ENCODE measurements at regions of chr1 and their contacts with region 1.

Region 1: GRCh38 chr1:245156081-245156735 is 1.4 kb downstream of the KIF26B start:
- DNase-seq: no peak
- ATAC-seq: peak; percentile 96
- H3K4me3 ChIP-seq: peak overlapping the region; percentile 50
- H3K27ac ChIP-seq: no peak overlapping the region
- H3K4me1 ChIP-seq: peaks cover 18% of the 10 kb centered on the region
- H3K27me3 ChIP-seq: peaks cover 12 to 26% of the 10 kb centered on the region in 2 experiments
- CTCF ChIP-seq: peak; percentile 57 to 81 (median 77)
- EP300 ChIP-seq: no peak
- POLR2A ChIP-seq: no peak
- RAD21 ChIP-seq: peak; percentile 65

Region 2: GRCh38 chr1:245177071-245177900 is 21.1 kb after region 1 on chr1:
- CTCF ChIA-PET with region 1: no interaction called
- POLR2A ChIA-PET with region 1: no interaction called
- RAD21 ChIA-PET with region 1: no interaction called
- SMC1A ChIA-PET with region 1: no interaction called
- in situ Hi-C with region 1: no loop called
- intact Hi-C with region 1: no loop called
- DNase-seq: no peak
- ATAC-seq: no peak
- H3K4me3 ChIP-seq: no peak overlapping the region
- H3K27ac ChIP-seq: no peak overlapping the region
- H3K4me1 ChIP-seq: no peaks in the 10 kb centered on the region
- H3K27me3 ChIP-seq: peaks cover 0 to 1% of the 10 kb centered on the region in 2 experiments; a peak in 2 of 4 replicates
- CTCF ChIP-seq: no peak
- EP300 ChIP-seq: no peak
- POLR2A ChIP-seq: no peak
- RAD21 ChIP-seq: no peak

Region 3: DNA sequence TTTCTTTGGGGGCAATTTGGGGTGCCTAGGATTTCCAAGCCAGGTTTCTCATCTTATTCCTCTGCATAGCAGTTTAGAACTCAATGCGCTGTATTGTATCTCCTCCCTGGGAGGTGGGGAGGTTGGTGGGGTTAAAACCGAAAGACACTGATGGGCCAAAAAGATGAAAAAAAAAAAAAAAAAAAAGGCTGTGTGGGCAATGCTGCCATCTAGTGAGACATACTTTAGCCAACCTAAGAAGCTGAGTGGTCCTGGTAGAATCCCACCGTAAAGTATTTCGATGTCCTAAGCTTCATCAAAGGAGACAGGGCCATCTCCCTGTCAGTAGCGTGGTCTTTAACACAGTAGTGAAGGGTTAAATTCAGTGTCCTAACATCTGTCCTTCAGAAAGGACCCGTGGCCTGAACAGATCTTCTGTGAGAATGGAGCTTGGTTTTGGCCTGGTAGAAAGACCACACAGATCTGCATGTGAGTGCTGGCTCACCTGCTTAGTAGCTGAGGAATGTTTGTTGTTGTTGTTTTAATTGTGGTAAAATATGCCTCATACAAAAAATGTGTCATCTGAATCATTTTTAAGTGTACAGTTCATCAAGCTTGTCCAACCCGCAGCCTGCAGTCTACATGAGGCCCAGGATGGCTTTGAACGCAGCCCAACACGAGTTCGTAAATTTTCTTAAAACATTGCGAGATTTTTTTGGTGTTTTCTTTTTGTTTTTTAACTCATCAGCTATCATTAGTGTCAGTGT is 224.8 kb after region 1 on chr1:
- CTCF ChIA-PET with region 1: interaction called, 9 read pairs
- POLR2A ChIA-PET with region 1: no interaction called
- RAD21 ChIA-PET with region 1: interaction called, 4 read pairs
- SMC1A ChIA-PET with region 1: interaction called, 3 read pairs
- in situ Hi-C with region 1: no loop called
- intact Hi-C with region 1: loop called (anchors 2 kb)
- DNase-seq: no peak
- ATAC-seq: no peak
- H3K4me3 ChIP-seq: no peak overlapping the region
- H3K27ac ChIP-seq: no peak overlapping the region
- H3K4me1 ChIP-seq: no peaks in the 10 kb centered on the region
- H3K27me3 ChIP-seq: peaks cover 0 to 2% of the 10 kb centered on the region in 2 experiments; a peak in 2 of 4 replicates
- CTCF ChIP-seq: peak in 2 of 3 experiments; percentile 10 to 24; a peak in 1 of 6 replicates
- EP300 ChIP-seq: no peak
- POLR2A ChIP-seq: no peak
- RAD21 ChIP-seq: 0 out of 2 replicates have a peak, but pooled peaks have one; percentile 25

Region 4: DNA sequence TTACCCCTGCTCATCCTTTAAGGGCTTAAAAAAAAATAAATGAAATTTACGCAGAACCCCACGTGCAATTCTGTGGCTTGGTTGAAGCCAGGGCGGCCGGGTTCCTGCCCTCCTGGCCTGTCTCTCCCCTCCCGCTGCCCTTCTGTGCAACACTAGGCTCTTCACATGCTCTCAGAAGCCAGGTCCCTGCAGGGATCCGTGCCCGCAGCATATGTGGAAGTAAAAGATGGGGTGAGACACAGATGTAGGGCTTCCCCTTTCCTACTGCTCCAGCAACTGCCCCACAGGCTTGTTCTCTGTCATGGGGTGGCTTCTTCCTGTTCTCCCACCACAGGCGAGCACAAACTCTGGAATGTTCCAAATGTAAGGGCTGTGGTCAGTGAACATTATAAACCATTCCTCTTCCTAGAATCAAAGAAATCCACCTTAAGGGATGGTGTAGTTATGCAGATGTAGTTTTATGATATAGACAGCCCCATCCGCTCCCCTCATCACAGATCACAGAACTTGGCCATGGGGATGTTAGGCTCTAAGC is 534.0 kb after region 1 on chr1:
- CTCF ChIA-PET with region 1: no interaction called
- POLR2A ChIA-PET with region 1: no interaction called
- RAD21 ChIA-PET with region 1: no interaction called
- SMC1A ChIA-PET with region 1: no interaction called
- in situ Hi-C with region 1: no loop called
- intact Hi-C with region 1: loop called (anchors 10 kb)
- DNase-seq: no peak
- ATAC-seq: no peak
- H3K4me3 ChIP-seq: no peak overlapping the region
- H3K27ac ChIP-seq: no peak overlapping the region
- H3K4me1 ChIP-seq: no peaks in the 10 kb centered on the region
- H3K27me3 ChIP-seq: no peaks in the 10 kb centered on the region
- CTCF ChIP-seq: no peak
- EP300 ChIP-seq: no peak
- POLR2A ChIP-seq: no peak
- RAD21 ChIP-seq: no peak

Region 5: GRCh38 chr1:246002725-246003441 is 846.7 kb after region 1 on chr1:
- CTCF ChIA-PET with region 1: interaction called, 29 read pairs
- POLR2A ChIA-PET with region 1: interaction called, 4 read pairs
- RAD21 ChIA-PET with region 1: interaction called, 19 read pairs
- SMC1A ChIA-PET with region 1: interaction called, 7 read pairs
- in situ Hi-C with region 1: loop called (anchors 5 kb)
- intact Hi-C with region 1: loop called (anchors 1 kb)
- DNase-seq: peak; percentile 39
- ATAC-seq: peak; percentile 85
- H3K4me3 ChIP-seq: no peak overlapping the region
- H3K27ac ChIP-seq: no peak overlapping the region
- H3K4me1 ChIP-seq: peaks cover 4% of the 10 kb centered on the region; the same call in 1 of the 2 replicates
- H3K27me3 ChIP-seq: no peaks in the 10 kb centered on the region
- CTCF ChIP-seq: peak; percentile 77 to 91 (median 82)
- EP300 ChIP-seq: no peak
- POLR2A ChIP-seq: no peak
- RAD21 ChIP-seq: peak; percentile 99

Region 6: DNA sequence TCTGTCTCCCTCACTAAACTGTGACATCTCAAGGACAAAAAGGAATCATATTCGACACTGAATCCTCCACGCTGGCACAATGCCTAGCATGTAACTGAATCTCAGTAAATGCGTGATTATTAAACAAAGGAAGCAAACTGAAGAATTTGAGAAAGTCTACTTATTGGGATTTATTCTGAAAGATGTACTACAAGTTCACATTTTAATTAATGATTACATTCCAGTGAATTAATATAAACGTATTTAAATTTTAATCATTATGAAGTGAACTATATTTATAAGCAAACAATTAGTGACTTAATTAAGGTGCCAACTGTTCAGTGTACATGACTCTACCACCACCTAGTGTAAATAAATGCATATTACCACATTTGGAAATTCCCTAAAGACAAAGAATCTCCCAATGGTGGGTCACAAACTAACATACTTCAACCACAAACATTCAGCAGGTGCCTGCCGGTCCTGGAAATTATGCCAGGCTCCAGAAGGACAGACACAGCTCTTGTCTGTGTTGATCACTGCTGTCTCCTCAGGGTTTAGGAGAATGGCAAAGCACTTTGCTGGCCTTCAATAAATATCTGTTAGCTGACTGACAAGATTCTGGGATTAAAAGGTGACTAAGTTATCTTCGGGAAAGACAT is 1294.5 kb after region 1 on chr1:
- CTCF ChIA-PET with region 1: interaction called, 5 read pairs
- POLR2A ChIA-PET with region 1: no interaction called
- RAD21 ChIA-PET with region 1: interaction called, 3 read pairs
- SMC1A ChIA-PET with region 1: interaction called, 6 read pairs
- in situ Hi-C with region 1: loop called (anchors 5 kb)
- intact Hi-C with region 1: loop called (anchors 1 kb)
- DNase-seq: no peak
- ATAC-seq: peak; percentile 85
- H3K4me3 ChIP-seq: no peak overlapping the region
- H3K27ac ChIP-seq: no peak overlapping the region
- H3K4me1 ChIP-seq: no peaks in the 10 kb centered on the region
- H3K27me3 ChIP-seq: no peaks in the 10 kb centered on the region
- CTCF ChIP-seq: peak; percentile 56 to 82 (median 65); a peak in 4 of 6 replicates
- EP300 ChIP-seq: no peak
- POLR2A ChIP-seq: no peak
- RAD21 ChIP-seq: peak; percentile 90

Region 7: DNA sequence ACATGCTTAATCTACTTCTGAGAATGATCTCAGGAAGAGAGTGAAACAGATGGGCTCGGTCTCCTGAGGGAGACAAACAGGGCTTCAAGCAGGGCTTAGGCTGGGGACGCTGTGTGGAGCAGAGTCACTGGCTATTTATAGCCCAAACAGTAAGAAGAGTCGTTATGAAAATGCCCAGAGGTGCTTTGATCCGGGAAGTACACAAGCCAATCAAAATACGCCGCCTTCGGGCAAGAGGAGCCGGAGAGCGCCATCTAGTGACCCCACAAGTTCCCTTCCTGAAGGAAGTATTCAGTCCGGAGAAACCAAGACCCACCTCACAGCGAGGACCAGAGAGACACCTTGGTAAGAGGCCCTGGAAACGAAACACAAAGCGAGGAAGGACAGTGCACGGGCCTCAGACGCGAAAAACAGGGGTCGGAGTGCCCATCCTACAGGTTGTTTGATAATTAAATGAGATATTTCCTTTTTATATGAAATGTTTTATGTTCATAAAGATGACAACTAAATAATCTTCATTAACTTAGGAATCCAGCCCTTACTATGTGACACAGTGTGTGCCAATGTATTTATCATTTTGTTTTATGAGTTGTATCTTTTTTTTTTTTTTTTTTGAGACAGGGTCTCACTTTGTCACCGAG is 1543.0 kb after region 1 on chr1:
- CTCF ChIA-PET with region 1: interaction called, 3 read pairs
- POLR2A ChIA-PET with region 1: no interaction called
- RAD21 ChIA-PET with region 1: no interaction called
- SMC1A ChIA-PET with region 1: no interaction called
- in situ Hi-C with region 1: loop called (anchors 10 kb)
- intact Hi-C with region 1: loop called (anchors 5 kb)
- DNase-seq: peak; percentile 76
- ATAC-seq: peak; percentile 97
- H3K4me3 ChIP-seq: 0 out of 2 replicates have a peak overlapping the region, but pooled peaks have one; percentile 13
- H3K27ac ChIP-seq: peak overlapping the region; percentile 50
- H3K4me1 ChIP-seq: peaks cover 4% of the 10 kb centered on the region
- H3K27me3 ChIP-seq: no peaks in the 10 kb centered on the region
- CTCF ChIP-seq: peak; percentile 79 to 90 (median 90)
- EP300 ChIP-seq: no peak
- POLR2A ChIP-seq: no peak; the same call in 1 of the 2 replicates
- RAD21 ChIP-seq: peak; percentile 89